Ascending aorta (tissue), 2 donors: ENCODE measurements at regions of chr6 and their contacts with region 1.

Region 1: GRCh38 chr6:20092071-20092566 is 120.2 kb downstream of the MBOAT1 start:
- DNase-seq: no peak
- H3K4me3 ChIP-seq: no peak overlapping the region
- H3K27ac ChIP-seq: no peak overlapping the region
- H3K4me1 ChIP-seq: no peaks in the 10 kb centered on the region
- H3K27me3 ChIP-seq: no peaks in the 10 kb centered on the region
- CTCF ChIP-seq: peak; percentile 57 to 68 (median 62)

Region 2: DNA sequence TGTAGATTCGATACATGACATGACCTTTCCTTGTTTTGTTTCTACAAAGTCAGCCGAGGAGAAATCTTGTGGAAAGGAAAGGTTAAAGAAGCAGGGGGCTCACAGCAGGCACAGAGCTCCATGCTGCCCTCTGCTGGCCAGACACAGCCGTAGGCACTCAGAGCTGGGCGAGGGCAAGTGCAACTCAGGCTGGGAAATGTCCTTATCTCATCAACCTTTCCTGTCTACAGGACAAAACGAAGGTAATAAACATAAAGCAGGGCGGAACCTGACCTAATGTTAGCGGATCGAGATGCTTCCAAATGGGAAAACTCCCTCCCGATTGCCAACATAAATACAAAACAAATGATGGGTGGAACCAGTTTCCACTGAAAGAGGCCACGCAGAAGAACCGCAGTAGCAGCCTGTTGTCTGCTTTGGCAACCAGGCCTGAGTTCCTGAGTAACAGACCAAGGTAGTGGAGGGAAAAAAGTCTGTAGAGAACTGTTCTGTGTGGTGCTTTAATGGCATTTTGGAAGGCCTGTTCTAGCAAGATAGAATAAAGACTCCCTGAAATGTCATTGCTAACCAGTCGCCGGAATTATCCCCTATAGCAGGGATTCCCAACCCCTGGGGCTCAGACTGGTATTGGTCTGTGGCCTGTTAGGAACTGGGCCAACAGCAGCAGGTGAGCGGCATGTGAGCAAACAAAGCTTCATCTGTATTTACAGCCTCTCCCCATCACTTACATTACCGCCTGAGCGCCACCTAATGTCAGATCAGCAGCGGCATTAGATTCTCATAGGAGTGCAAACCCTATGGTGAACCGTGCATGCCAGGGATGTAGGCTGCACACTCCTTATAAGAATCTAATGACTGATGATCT is 34.9 kb after region 1 on chr6:
- intact Hi-C with region 1: loop called (anchors 1 kb)
- DNase-seq: peak in 1 of 2 donors; percentile 78
- H3K4me3 ChIP-seq: no peak overlapping the region
- H3K27ac ChIP-seq: peak overlapping the region; percentile 4 to 20
- H3K4me1 ChIP-seq: no peaks in the 10 kb centered on the region
- H3K27me3 ChIP-seq: no peaks in the 10 kb centered on the region
- CTCF ChIP-seq: peak; percentile 45 to 94 (median 94)

Region 3: DNA sequence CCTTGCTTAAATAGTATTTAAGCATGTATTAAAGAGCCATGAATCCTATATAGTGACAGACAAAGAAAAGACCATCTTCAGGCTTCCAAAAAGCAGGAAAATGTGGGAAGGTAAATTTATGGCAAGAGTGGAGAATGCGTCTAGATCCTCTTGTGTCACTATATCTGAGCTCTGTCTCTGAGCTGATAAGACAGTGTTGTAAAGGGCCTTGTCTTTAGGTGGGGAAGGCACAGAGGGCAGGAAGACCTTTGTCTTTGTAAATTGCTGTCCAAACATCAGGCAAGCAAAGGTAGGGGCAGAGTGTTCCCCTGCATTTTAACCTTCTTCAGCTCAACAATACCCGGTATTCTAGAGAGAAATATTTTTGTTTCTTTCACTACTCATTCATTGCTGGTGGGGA is 154.0 kb after region 1 on chr6:
- intact Hi-C with region 1: no loop called
- DNase-seq: no peak
- H3K4me3 ChIP-seq: no peak overlapping the region
- H3K27ac ChIP-seq: no peak overlapping the region
- H3K4me1 ChIP-seq: no peaks in the 10 kb centered on the region
- H3K27me3 ChIP-seq: no peaks in the 10 kb centered on the region
- CTCF ChIP-seq: no peak

Region 4: GRCh38 chr6:20534295-20535262 is 442.5 kb after region 1 on chr6 and contains the start of gene CDKAL1:
- intact Hi-C with region 1: loop called (anchors 5 kb)
- DNase-seq: peak; percentile 71 to 96
- H3K4me3 ChIP-seq: peak within 1 kb of the TSS; percentile 69 to 83
- H3K27ac ChIP-seq: peak within 1 kb of the TSS; percentile 85
- H3K4me1 ChIP-seq: peaks cover 0 to 12% of the 10 kb centered on the region in 2 donors
- H3K27me3 ChIP-seq: no peaks in the 10 kb centered on the region
- CTCF ChIP-seq: no peak
- total RNA-seq, gene CDKAL1: 11.9 TPM